ENCODE measurements at regions of chr2 and their contacts with region 1.

Region 1: DNA sequence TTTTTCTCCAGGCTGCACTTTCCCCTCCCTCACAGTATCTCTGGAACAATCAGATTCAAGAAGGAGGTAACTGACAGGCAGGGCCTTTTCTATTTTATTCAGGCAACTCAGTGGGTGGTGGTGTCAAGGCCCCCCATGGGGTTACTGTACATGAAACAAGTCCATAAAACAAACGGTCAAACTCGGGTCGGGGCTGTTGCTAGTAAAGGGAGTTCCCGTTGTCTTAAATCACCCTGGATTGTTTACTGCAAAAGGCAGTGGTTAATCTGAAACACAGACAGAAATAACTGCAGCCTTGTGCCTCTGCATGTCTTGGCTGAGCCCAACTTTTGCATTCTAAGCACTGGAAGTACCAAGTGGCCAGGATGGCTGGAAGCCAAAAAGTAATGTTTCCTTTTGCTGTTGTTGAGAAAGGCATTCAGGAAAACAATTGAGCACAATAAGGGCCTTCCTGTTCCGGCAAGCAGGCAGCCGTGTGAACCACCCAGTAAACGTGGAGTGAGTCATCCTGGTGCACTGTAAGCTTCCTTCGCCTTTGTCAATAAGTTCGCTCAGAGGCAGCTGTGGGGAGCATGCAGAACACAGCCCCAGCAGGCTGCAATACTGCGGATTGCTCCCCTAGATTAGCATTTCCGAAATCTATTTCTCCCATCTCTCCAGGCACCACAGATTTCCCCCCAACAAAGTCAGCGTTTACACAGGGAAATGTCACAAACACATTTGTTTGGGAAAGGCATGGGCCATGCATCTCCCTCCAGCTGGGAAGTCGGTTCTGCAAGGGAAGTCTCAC is 149.6 kb downstream of the IRS1 start:
- DNase-seq: peak; percentile 68
- ATAC-seq: peak; percentile 92

Region 2: GRCh38 chr2:226721541-226721940 is 71.5 kb after region 1 on chr2:
- intact Hi-C with region 1: loop called (anchors 2 kb)
- DNase-seq: peak; percentile 63
- ATAC-seq: no peak

Measured in Right ventricle myocardium superior (tissue), 1 donor.